HEK293T (cell line): ENCODE measurements at regions of chr17 and their contacts with region 1.

Region 1: DNA sequence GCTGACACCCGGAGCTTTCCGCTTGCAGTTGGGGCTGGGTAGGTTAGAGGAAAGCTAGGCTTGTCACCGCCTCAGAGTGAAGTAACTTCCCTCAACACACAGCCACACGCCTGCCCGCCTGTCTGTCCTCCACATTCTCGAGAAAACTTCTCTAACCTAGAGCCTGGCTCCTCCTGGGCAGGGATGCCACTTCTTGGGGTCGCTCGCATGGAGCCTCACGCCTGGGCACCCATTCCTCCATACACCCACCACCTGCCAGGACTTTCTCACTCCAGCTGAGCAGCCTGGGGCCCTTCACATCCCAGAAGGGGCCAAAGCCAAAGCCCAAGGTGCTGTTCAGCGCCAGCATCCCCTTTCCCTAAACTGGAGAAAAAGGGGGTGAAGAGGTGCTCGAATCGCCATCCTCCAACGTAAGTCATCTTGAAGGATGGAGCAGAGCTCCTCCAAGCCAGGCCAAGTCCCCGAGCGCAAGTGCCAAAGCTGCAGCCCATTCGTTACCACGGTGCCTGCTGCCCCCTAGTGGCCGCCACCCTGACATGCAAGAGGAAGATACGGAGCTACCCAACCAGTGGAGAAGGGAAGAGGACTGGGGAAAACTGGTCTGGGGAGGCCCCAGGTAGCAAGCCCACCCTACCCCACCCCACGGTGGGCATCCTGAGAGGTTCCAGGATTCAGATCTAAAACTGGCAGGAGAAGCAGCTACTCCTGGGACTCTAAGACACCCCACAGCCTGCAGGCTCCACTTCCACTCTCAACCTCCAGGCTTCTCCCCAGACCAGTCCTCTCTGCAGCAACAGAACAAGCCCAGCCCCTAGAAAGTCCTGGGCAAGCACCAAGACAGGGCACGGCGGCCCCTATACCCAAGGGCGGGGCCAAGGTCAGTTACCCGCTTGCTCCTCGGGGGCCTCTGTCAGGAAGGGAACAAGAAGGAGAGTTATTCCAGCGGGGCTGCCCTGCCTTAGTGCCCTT is 63.1 kb downstream of the MYO18A start:
- DNase-seq: peak; percentile 74

Region 2: DNA sequence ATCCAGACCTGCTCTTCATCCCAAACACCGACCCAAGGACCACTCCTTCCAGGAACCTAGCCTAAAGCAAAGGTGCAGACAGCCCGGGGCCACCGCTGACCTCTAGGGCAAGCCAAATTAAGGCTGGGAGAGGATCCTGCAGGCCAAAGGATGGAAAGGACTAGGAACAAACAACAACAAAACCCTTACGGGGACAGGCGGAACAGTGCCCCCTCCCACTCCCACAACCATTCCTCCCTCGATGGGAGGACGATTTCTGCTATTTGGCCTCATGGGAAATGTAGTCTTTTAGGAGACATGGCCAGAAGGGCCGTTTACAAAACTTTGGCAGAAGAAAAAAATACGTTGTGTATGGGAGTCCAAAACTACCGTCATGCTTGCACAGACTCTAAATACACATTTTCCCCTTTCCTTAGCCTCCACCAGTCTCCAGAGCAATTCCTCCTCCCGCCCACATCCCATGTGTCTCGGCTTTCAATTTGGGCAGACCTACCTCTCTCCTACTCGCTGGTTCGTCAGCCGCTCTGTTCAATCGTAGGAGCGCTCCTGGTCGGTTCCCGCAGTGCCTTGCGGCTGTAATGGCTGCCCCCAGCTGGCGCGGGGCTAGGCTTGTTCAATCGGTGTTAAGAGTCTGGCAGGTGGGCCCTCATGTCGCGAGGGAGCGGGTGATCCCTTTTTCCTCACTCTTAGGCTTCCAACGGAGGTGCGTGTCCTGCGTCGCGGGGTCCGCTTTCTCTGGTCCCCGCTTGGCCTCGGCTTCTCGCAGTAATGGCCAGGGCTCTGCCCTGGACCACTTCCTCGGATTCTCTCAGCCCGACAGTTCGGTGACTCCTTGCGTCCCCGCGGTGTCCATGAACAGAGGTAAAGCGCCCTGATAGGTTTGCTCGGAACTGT is 262.4 kb before region 1 on chr17 and contains the start of gene ERAL1:
- CTCF ChIA-PET with region 1: no interaction called
- POLR2A ChIA-PET with region 1: no interaction called
- DNase-seq: peak; percentile 81

Region 3: DNA sequence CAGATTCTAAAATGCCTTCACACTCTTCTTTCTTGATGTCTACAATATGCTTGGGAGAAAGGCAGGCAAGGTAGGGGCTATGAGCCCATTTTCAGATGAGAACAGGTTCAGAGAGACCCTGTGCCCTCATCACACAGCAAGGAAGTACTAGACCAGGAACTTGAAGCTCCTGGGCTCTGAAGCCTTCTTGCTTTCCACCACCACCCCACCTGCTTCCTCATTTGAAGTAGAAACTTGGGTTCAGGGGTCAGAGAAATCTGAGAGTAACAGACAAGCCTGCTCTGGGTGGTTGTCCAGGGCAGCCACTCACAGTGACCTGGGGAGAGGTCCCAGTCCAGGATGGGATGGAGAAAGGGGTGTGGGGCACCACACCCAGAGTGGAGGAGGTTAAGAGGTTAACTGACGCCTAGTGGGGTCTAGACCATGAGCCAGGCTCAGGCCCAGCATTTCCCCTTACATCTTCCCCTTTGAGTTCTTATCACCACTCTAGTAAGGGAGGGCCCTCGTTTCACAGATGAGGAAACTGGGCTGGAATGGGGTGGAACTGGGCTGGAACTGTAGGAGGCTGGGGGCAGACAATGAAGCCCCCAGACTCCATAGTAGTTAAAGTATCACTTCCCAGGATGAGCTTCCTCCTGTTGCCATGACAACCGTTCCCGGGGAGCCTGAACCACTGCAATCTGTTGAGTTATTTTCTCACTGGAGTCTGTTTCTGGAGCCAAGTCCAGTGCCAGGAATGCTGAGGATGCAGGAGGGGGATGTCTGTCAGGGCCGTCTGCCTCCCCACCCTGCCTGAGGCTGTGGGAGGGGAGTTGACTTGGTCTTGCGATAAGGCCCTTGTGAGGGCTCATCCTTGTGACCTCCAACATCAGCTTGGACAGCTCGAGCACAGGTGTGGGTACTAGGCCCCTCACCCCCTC is 149.6 kb before region 1 on chr17:
- CTCF ChIA-PET with region 1: interaction called, 116 read pairs
- POLR2A ChIA-PET with region 1: interaction called, 10 read pairs
- DNase-seq: no peak

Region 4: DNA sequence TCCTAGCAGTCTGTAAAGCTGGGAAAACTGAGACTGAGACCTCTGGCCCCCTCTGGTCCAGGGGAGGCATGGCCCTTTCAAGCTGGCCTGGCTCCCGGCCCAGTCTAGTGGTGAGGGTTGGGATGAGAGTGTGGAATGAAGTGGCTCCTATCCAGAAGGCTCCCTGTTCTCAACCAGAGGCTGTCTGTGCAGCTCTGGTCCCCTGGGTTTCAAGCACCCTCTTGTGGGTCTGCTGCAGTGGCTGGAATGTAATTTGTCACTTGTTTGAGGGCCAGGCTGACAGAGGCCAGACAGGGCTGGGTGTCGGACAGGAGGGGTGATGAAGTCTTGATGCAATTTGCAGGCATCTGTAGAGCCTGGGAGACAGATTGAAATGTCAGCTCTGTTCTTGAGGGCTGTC is 143.7 kb before region 1 on chr17:
- CTCF ChIA-PET with region 1: interaction called, 18 read pairs
- POLR2A ChIA-PET with region 1: interaction called, 7 read pairs
- DNase-seq: no peak

Region 5: DNA sequence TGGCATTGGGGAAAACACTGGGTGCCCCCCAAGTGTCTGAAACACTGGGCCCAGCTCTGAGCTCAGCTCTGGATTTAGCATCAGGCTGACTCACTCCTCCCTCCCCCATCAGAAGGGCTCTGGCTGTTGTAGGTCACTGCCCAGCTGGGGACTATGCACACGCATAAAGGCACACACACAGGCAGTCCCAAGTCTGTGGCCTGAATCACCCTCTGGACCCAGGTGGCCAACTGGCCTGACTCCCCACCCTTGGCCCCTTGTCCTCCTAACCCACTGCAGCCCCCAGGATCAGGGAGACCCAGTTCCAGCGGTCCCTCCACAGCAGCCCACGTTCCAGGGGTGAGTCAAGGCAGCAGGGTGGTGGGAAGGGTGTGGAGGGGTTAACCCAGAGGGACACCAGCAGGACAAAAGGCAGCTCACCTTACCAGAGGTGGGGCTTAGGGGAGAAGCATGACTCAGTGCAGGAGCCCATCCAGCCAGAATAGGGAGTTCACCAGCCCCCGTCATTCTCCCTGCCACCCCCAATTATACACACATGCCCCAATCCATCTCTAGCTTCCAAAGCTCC is 16.1 kb after region 1 on chr17:
- CTCF ChIA-PET with region 1: interaction called, 30 read pairs
- POLR2A ChIA-PET with region 1: no interaction called
- DNase-seq: no peak

Region 6: DNA sequence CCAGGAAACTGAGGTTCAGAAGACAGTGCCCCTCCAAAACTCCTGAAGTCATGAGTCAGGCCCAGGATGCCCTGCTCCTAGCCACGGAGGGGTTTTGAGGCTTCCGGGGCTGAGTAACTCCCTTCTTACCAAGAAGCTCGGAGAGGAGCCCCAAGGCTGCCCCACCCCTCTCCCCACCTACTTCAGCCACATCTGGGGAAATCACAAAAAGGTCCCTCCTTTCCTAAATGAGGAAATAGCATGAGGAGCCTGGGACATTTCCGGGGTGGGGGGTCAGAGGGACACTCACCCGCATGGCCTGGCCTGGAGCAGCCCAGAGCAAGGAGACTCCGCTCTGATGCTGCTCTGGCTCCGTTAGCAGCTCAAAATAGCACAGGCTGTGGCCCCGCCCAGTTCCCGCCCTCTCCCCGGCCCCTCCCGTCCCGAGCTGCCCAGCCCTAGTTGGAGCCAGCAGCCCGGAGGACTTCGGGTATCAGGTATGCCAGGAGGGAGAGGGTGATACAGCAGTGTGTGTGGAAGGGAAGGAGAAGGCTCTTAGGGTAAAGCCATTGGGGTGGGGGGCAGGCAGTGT is 23.0 kb after region 1 on chr17:
- CTCF ChIA-PET with region 1: interaction called, 10 read pairs
- POLR2A ChIA-PET with region 1: interaction called, 4 read pairs
- DNase-seq: peak; percentile 62